Breast epithelium (tissue), 4 donors: ENCODE measurements at regions of chr7 and their contacts with region 1.

Region 1: DNA sequence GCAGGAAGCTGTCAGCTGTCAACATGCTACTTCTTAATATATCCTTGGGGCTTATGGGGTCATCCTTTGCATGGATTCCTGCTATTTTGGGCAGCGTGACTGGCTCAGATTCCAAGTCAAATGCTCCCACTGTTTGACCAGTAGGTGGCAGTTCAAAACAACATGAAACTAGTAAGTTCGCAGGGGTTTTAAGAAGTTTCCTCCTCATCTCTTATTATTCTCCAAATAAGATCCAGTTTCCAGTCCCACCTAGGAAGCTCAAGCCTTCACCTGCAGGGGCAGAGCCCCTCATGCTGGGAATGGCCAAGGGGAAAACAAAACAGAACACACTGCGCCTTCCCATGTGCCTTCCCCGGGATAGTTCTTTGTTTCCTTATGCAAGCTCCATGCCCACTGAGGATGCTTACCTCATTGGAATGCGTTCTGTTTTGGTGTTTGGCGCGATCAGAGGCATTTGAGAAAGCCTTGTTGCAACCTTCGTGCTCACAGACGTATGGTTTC is 259.8 kb downstream of the GLI3 start:
- DNase-seq: no peak
- H3K4me3 ChIP-seq: no peak overlapping the region
- H3K27ac ChIP-seq: peak overlapping the region in 1 of 2 donors; percentile 8
- H3K4me1 ChIP-seq: peaks cover 0 to 4% of the 10 kb centered on the region in 2 donors
- H3K27me3 ChIP-seq: no peaks in the 10 kb centered on the region
- CTCF ChIP-seq: peak; percentile 47 to 60 (median 56)
- POLR2A ChIP-seq: no peak

Region 2: GRCh38 chr7:41940760-41941343 is 36.3 kb before region 1 on chr7:
- intact Hi-C with region 1: loop called (anchors 1 kb)
- DNase-seq: peak; percentile 53 to 65
- H3K4me3 ChIP-seq: no peak overlapping the region
- H3K27ac ChIP-seq: no peak overlapping the region
- H3K4me1 ChIP-seq: peaks cover 0 to 3% of the 10 kb centered on the region in 2 donors
- H3K27me3 ChIP-seq: peaks cover 0 to 3% of the 10 kb centered on the region in 2 donors
- CTCF ChIP-seq: peak; percentile 86 to 93 (median 86)
- POLR2A ChIP-seq: no peak

Region 3: GRCh38 chr7:42010751-42011150 is 33.5 kb after region 1 on chr7:
- intact Hi-C with region 1: no loop called
- DNase-seq: no peak
- H3K4me3 ChIP-seq: no peak overlapping the region
- H3K27ac ChIP-seq: no peak overlapping the region
- H3K4me1 ChIP-seq: no peaks in the 10 kb centered on the region
- H3K27me3 ChIP-seq: no peaks in the 10 kb centered on the region
- CTCF ChIP-seq: no peak
- POLR2A ChIP-seq: no peak